Transverse colon (tissue), 4 donors: ENCODE measurements at regions of chr12 and their contacts with region 1.

Region 1: GRCh38 chr12:12266873-12267741 is at the start of gene LRP6:
- DNase-seq: peak; percentile 88
- H3K4me3 ChIP-seq: peak within 1 kb of the TSS; percentile 52 to 89 (median 71)
- H3K27ac ChIP-seq: peak within 1 kb of the TSS; percentile 92 to 96 (median 94)
- H3K4me1 ChIP-seq: peaks cover 0 to 28% (median 13%) of the 10 kb centered on the region in 4 donors
- H3K27me3 ChIP-seq: no peaks in the 10 kb centered on the region
- CTCF ChIP-seq: peak in 2 of 5 experiments; percentile 14 to 46
- EP300 ChIP-seq: no peak
- POLR2A ChIP-seq: peak; percentile 73
- total RNA-seq, gene LRP6: 11.7 to 102 (median 58.9) TPM

Region 2: DNA sequence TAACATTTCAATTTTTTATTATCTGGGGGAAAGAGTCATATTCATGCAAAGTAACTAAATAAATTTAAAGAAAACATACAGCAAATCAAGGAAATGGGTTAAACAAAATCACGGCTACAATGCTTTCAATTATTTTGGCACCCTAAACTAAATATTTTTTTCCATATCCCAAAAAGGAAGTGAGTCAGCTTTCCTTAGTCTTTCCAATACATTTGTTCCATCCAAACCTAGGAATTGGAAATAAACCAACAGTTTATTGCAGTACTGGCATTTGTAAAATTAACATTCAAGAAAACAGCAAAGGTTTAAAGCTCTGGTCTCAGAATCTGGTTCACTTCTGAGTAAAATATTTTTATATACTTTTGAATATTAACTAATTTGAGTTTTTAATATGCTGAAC is 107.1 kb before region 1 on chr12:
- in situ Hi-C with region 1: no loop called
- intact Hi-C with region 1: loop called (anchors 10 kb)
- DNase-seq: no peak
- H3K4me3 ChIP-seq: no peak overlapping the region
- H3K27ac ChIP-seq: no peak overlapping the region
- H3K4me1 ChIP-seq: peaks cover 0 to 10% (median 4%) of the 10 kb centered on the region in 4 donors
- H3K27me3 ChIP-seq: no peaks in the 10 kb centered on the region
- CTCF ChIP-seq: no peak
- EP300 ChIP-seq: no peak
- POLR2A ChIP-seq: no peak

Region 3: GRCh38 chr12:13559318-13559978 is 1292.3 kb after region 1 on chr12:
- in situ Hi-C with region 1: no loop called
- intact Hi-C with region 1: no loop called
- DNase-seq: peak; percentile 68
- H3K4me3 ChIP-seq: no peak overlapping the region
- H3K27ac ChIP-seq: no peak overlapping the region
- H3K4me1 ChIP-seq: peaks cover 0 to 16% (median 6%) of the 10 kb centered on the region in 4 donors
- H3K27me3 ChIP-seq: no peaks in the 10 kb centered on the region
- CTCF ChIP-seq: no peak
- EP300 ChIP-seq: no peak
- POLR2A ChIP-seq: no peak